ENCODE measurements at regions of chr11 and their contacts with region 1.

Region 1: DNA sequence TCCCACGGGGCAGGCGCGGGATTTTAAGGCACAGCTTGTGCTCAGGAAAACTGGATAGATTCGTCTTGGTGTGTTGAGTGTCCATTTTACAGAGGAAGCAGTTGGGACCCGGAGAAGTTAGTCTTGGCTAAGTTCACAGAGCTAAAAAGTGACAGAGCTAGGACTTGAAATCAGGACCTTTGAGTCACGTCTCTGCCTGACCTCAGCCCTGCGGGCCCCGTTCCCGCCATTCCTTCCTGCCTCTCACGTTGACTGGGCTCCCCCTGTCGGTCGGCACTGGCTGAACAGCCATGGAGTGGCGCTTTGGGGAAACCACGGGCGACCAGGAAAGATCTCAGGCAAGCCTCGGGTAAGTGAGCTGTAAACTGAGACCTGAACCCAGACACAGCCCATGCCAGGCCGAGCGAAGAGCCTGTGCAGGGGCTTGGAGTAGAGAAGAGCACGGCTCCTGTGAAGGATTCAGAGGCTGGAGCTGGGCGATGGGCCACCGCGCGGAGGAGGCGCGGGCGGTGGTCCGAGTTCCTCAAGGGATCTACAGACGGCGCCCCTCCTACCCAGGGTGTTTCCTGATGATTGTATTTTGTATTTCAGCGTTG is 54.1 kb downstream of the WNT11 start:
- DNase-seq: peak; percentile 94
- H3K4me3 ChIP-seq: peak overlapping the region in 7 of 8 donors; percentile 18 to 62 (median 38)
- H3K27ac ChIP-seq: no peak overlapping the region
- H3K4me1 ChIP-seq: peaks cover 8 to 27% (median 21%) of the 10 kb centered on the region in 6 donors
- H3K27me3 ChIP-seq: no peaks in the 10 kb centered on the region
- CTCF ChIP-seq: peak; percentile 84 to 95 (median 92)
- POLR2A ChIP-seq: no peak

Region 2: GRCh38 chr11:75802913-75803820 is 349.0 kb before region 1 on chr11:
- intact Hi-C with region 1: loop called (anchors 10 kb)
- DNase-seq: peak; percentile 83
- H3K4me3 ChIP-seq: no peak overlapping the region
- H3K27ac ChIP-seq: peak overlapping the region in 1 of 8 donors; percentile 60
- H3K4me1 ChIP-seq: peaks cover 4 to 28% (median 18%) of the 10 kb centered on the region in 6 donors
- H3K27me3 ChIP-seq: no peaks in the 10 kb centered on the region
- CTCF ChIP-seq: peak; percentile 86 to 94 (median 91)
- POLR2A ChIP-seq: no peak

Region 3: DNA sequence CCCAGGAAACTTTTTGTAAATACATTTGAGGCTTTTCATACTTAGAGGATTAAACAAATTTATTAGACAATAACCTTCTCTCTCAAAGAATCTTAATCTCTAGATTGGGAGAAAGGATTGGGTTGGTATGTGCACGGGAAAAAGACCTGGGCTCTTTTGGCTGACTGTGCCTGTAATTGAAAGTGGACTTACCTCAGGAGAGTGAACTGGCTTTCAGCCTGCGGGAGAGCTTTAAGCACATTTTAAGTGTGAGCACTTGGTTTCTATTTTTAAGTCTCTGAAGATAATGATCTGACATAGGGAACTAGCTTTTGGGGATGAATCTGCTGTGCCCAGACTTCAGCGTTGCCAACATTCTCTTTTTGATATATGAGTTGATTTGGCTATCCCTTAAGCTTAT is 301.4 kb before region 1 on chr11:
- intact Hi-C with region 1: no loop called
- DNase-seq: no peak
- H3K4me3 ChIP-seq: no peak overlapping the region
- H3K27ac ChIP-seq: peak overlapping the region in 5 of 8 donors; percentile 1 to 58 (median 37)
- H3K4me1 ChIP-seq: peaks cover 4 to 46% (median 16%) of the 10 kb centered on the region in 6 donors
- H3K27me3 ChIP-seq: no peaks in the 10 kb centered on the region
- CTCF ChIP-seq: no peak
- POLR2A ChIP-seq: no peak

Region 4: GRCh38 chr11:75896843-75897419 is 255.3 kb before region 1 on chr11:
- intact Hi-C with region 1: loop called (anchors 5 kb)
- DNase-seq: no peak
- H3K4me3 ChIP-seq: no peak overlapping the region
- H3K27ac ChIP-seq: no peak overlapping the region
- H3K4me1 ChIP-seq: peaks cover 9 to 65% (median 20%) of the 10 kb centered on the region in 6 donors
- H3K27me3 ChIP-seq: no peaks in the 10 kb centered on the region
- CTCF ChIP-seq: peak; percentile 44 to 83 (median 74)
- POLR2A ChIP-seq: no peak

Region 5: GRCh38 chr11:76086743-76087635 is 65.2 kb before region 1 on chr11:
- intact Hi-C with region 1: no loop called
- DNase-seq: no peak
- H3K4me3 ChIP-seq: no peak overlapping the region
- H3K27ac ChIP-seq: no peak overlapping the region
- H3K4me1 ChIP-seq: peaks cover 0 to 6% (median 0%) of the 10 kb centered on the region in 6 donors
- H3K27me3 ChIP-seq: no peaks in the 10 kb centered on the region
- CTCF ChIP-seq: no peak
- POLR2A ChIP-seq: no peak

Measured in spleen (tissue), 13 donors.